Activated naive CD4-positive, alpha-beta T cell treated with anti-CD3 and anti-CD28 coated beads for 36 hours (primary cell): ENCODE measurements at regions of chr9 and their contacts with region 1.

Region 1: DNA sequence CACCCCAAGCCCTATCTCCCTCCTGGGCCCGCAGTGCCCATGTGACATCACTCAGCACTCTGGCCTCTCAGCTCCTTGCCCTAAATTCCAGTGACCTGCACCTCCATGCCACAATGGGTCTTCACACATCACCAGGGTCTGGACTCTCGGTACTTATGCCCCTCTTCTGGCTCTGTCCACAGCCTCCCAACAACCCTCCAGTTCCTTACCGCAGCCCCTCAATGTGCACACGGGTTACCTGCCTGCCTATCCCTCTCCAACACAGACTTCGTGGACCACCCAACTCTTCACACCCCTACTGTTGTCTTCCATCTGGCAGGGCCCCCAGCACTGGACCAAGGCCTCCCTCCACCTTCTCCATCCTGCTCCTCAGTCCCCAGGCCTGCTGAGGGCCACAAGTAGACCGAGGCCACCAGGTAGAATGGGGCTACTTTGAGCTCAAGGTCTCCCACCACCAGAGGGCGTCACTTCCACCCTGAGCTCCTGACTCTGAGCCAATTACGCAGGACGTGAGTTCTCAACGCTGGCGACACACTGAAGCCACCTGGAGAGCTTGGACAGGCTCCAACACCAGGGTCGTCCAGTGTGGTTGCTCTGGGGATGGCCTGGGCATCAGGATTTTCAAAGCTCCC is 172.1 kb downstream of the GABBR2 start:
- DNase-seq: peak; percentile 61
- H3K4me3 Mint-ChIP-seq: no peak overlapping the region
- H3K27ac Mint-ChIP-seq: no peak overlapping the region
- H3K4me1 Mint-ChIP-seq: no peaks in the 10 kb centered on the region
- H3K27me3 Mint-ChIP-seq: peaks cover 3% of the 10 kb centered on the region

Region 2: GRCh38 chr9:98627296-98627695 is 90.6 kb after region 1 on chr9:
- CTCF ChIA-PET with region 1: no interaction called
- intact Hi-C with region 1: no loop called
- DNase-seq: no peak
- H3K4me3 Mint-ChIP-seq: no peak overlapping the region
- H3K27ac Mint-ChIP-seq: no peak overlapping the region
- H3K4me1 Mint-ChIP-seq: no peaks in the 10 kb centered on the region
- H3K27me3 Mint-ChIP-seq: peaks cover 12% of the 10 kb centered on the region

Region 3: GRCh38 chr9:98707166-98708102 is 170.8 kb after region 1 on chr9:
- CTCF ChIA-PET with region 1: no interaction called
- intact Hi-C with region 1: loop called (anchors 2 kb)
- DNase-seq: peak; percentile 53
- H3K4me3 Mint-ChIP-seq: no peak overlapping the region
- H3K27ac Mint-ChIP-seq: no peak overlapping the region
- H3K4me1 Mint-ChIP-seq: peaks cover 3% of the 10 kb centered on the region
- H3K27me3 Mint-ChIP-seq: peaks cover 61% of the 10 kb centered on the region

Region 4: DNA sequence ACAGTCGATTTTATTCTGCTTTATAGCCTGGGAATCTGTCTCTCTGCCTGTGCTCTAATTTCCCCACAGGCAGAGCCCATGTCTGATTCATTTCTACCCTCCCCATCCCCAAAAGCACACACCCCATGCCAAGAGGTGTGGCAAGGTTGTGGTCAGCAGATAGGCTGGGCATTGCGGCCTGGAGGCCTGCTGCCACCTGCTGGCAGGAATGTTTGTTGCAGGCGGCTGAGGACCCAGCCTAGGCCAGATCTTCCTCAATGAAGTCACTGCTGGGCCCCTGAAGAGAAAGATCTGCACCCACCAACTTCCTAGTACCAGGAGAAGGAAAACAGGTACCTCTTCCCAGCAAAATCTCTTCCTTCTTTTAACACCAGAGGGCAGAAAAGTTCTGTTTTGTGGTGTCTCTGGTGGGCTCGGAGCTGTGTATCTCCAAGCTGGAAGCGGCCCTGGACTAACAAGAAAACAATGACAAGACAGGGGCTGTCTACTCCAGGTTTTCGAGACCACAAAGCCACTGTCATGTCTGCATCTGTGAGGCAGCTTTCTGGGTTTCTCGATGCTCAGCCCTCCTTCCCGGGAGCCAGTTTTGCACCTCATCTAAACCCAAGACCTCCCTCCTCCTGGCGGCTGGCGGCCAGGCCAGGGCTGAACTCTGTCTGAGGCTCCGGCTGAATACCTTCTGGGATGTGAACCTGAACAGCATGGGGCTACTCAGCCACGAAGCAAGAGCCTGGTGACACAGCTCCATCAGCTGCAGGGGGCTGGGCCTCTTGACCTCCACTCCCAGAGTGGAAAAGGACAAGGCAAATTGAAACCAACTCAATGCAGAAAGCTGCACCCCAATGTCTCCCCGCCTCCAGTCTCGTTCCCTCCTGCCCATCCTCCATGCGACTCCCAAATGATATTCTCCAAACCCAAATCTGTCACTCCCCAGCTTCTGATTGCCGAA is 254.8 kb after region 1 on chr9:
- CTCF ChIA-PET with region 1: no interaction called
- intact Hi-C with region 1: loop called (anchors 5 kb)
- DNase-seq: peak; percentile 70
- H3K4me3 Mint-ChIP-seq: no peak overlapping the region
- H3K27ac Mint-ChIP-seq: no peak overlapping the region
- H3K4me1 Mint-ChIP-seq: peaks cover 30% of the 10 kb centered on the region
- H3K27me3 Mint-ChIP-seq: no peaks in the 10 kb centered on the region